ENCODE measurements at regions of chr6 and their contacts with region 1.

Region 1: GRCh38 chr6:156953479-156954146 is 176.4 kb downstream of the ARID1B start:
- DNase-seq: peak; percentile 99
- ATAC-seq: peak; percentile 86
- H3K4me3 ChIP-seq: no peak overlapping the region
- H3K27ac ChIP-seq: no peak overlapping the region
- H3K4me1 ChIP-seq: peaks cover 18% of the 10 kb centered on the region
- H3K27me3 ChIP-seq: no peaks in the 10 kb centered on the region
- CTCF ChIP-seq: peak; percentile 51
- POLR2A ChIP-seq: peak; percentile 44; the same call in 1 of the 2 replicates
- RAD21 ChIP-seq: peak; percentile 22; the same call in 1 of the 2 replicates

Region 2: GRCh38 chr6:156686995-156687788 is 266.4 kb before region 1 on chr6:
- CTCF ChIA-PET with region 1: no interaction called
- POLR2A ChIA-PET with region 1: no interaction called
- dilution Hi-C with region 1: no loop called
- in situ Hi-C with region 1: no loop called
- intact Hi-C with region 1: loop called (anchors 10 kb)
- DNase-seq: peak; percentile 87
- ATAC-seq: peak; percentile 94
- H3K4me3 ChIP-seq: peak overlapping the region; percentile 74
- H3K27ac ChIP-seq: peak overlapping the region; percentile 99
- H3K4me1 ChIP-seq: no peaks in the 10 kb centered on the region
- H3K27me3 ChIP-seq: no peaks in the 10 kb centered on the region
- CTCF ChIP-seq: no peak
- POLR2A ChIP-seq: peak; percentile 77
- RAD21 ChIP-seq: no peak

Region 3: GRCh38 chr6:157021344-157021992 is 67.9 kb after region 1 on chr6:
- CTCF ChIA-PET with region 1: interaction called, 7 read pairs
- POLR2A ChIA-PET with region 1: no interaction called
- dilution Hi-C with region 1: no loop called
- in situ Hi-C with region 1: no loop called
- intact Hi-C with region 1: loop called (anchors 5 kb)
- DNase-seq: peak; percentile 81
- ATAC-seq: peak; percentile 78
- H3K4me3 ChIP-seq: peak overlapping the region; percentile 64
- H3K27ac ChIP-seq: peak overlapping the region; percentile 98
- H3K4me1 ChIP-seq: peaks cover 12% of the 10 kb centered on the region
- H3K27me3 ChIP-seq: no peaks in the 10 kb centered on the region
- CTCF ChIP-seq: peak; percentile 52
- POLR2A ChIP-seq: peak; percentile 95
- RAD21 ChIP-seq: peak; percentile 25; the same call in 1 of the 2 replicates

Region 4: GRCh38 chr6:157274471-157275226 is 321.0 kb after region 1 on chr6:
- CTCF ChIA-PET with region 1: no interaction called
- POLR2A ChIA-PET with region 1: no interaction called
- dilution Hi-C with region 1: no loop called
- in situ Hi-C with region 1: no loop called
- intact Hi-C with region 1: loop called (anchors 10 kb)
- DNase-seq: peak; percentile 57
- ATAC-seq: peak; percentile 99
- H3K4me3 ChIP-seq: peak overlapping the region; percentile 90
- H3K27ac ChIP-seq: peak overlapping the region; percentile 79
- H3K4me1 ChIP-seq: peaks cover 3% of the 10 kb centered on the region
- H3K27me3 ChIP-seq: no peaks in the 10 kb centered on the region
- CTCF ChIP-seq: peak; percentile 85
- POLR2A ChIP-seq: peak; percentile 67
- RAD21 ChIP-seq: peak; percentile 78

Measured in IMR-90 (cell line).